ENCODE measurements at regions of chr2 and their contacts with region 1.

Region 1: DNA sequence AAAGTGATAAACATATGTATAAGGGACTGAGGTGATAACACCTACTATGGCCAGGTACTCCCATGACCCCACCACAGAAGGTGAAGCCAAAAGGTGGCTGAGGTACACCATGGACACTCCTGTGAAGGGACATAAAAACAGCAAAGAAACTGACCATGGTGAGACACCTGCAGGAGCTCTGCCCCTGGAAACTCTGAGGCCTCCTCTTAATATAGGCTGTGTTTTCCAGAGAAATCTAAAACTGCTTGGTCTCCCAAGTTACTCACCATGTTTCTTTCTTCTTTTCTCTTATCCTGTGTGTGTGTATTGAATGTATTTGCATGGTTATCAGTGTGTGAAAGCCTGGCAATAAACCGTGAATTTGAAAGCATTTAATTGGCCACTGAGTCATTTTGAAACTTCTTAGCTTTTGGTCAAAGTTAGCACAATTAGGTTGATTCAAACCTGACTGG is 739.3 kb upstream of the GCFC2 start:
- DNase-seq: peak; percentile 90
- ATAC-seq: peak; percentile 93
- H3K4me3 ChIP-seq: no peak overlapping the region
- H3K27ac ChIP-seq: no peak overlapping the region
- H3K4me1 ChIP-seq: 0 out of 2 replicates have a peak, but pooled peaks cover 3% of the 10 kb centered on the region
- H3K27me3 ChIP-seq: no peaks in the 10 kb centered on the region
- CTCF ChIP-seq: no peak
- EP300 ChIP-seq: peak; percentile 87 to 97
- POLR2A ChIP-seq: no peak
- RAD21 ChIP-seq: no peak

Region 2: DNA sequence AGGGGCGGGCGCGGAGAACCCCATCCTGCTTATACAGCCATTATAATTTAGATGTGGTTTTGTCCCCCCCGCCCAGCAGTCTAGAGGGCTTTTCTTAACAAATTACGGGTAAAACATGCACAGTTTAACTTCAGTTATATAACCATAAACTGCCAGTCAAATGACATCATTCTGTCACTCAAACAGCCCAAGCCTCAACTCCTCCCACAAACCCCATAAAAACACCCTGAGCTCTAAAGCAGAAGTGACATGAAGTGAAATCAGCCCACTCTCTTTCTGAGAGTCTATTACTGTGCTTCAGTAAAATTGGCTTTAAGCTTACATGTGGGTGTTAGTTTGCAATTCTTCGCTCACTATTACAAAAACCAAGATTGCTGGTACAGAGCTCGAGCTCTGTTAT is 34.2 kb before region 1 on chr2:
- CTCF ChIA-PET with region 1: interaction called, 5 read pairs
- POLR2A ChIA-PET with region 1: interaction called, 4 read pairs
- RAD21 ChIA-PET with region 1: interaction called, 5 read pairs
- SMC1A ChIA-PET with region 1: interaction called, 14 read pairs
- in situ Hi-C with region 1: no loop called
- intact Hi-C with region 1: no loop called
- DNase-seq: peak; percentile 17
- ATAC-seq: peak; percentile 99
- H3K4me3 ChIP-seq: no peak overlapping the region
- H3K27ac ChIP-seq: no peak overlapping the region
- H3K4me1 ChIP-seq: no peaks in the 10 kb centered on the region
- H3K27me3 ChIP-seq: no peaks in the 10 kb centered on the region
- CTCF ChIP-seq: no peak
- EP300 ChIP-seq: no peak
- POLR2A ChIP-seq: no peak
- RAD21 ChIP-seq: no peak

Region 3: GRCh38 chr2:76437564-76437963 is 12.5 kb before region 1 on chr2:
- CTCF ChIA-PET with region 1: no interaction called
- POLR2A ChIA-PET with region 1: no interaction called
- RAD21 ChIA-PET with region 1: no interaction called
- SMC1A ChIA-PET with region 1: no interaction called
- in situ Hi-C with region 1: no loop called
- intact Hi-C with region 1: no loop called
- DNase-seq: no peak
- ATAC-seq: no peak
- H3K4me3 ChIP-seq: no peak overlapping the region
- H3K27ac ChIP-seq: no peak overlapping the region
- H3K4me1 ChIP-seq: no peaks in the 10 kb centered on the region
- H3K27me3 ChIP-seq: no peaks in the 10 kb centered on the region
- CTCF ChIP-seq: no peak
- EP300 ChIP-seq: no peak
- POLR2A ChIP-seq: no peak
- RAD21 ChIP-seq: no peak

Region 4: GRCh38 chr2:76464310-76464709 is 14.3 kb after region 1 on chr2:
- CTCF ChIA-PET with region 1: interaction called, 11 read pairs
- POLR2A ChIA-PET with region 1: no interaction called
- RAD21 ChIA-PET with region 1: interaction called, 22 read pairs
- SMC1A ChIA-PET with region 1: interaction called, 38 read pairs
- in situ Hi-C with region 1: no loop called
- intact Hi-C with region 1: no loop called
- DNase-seq: no peak
- ATAC-seq: peak; percentile 61
- H3K4me3 ChIP-seq: no peak overlapping the region
- H3K27ac ChIP-seq: no peak overlapping the region
- H3K4me1 ChIP-seq: no peaks in the 10 kb centered on the region
- H3K27me3 ChIP-seq: no peaks in the 10 kb centered on the region
- CTCF ChIP-seq: no peak; a peak in 1 of 6 replicates
- EP300 ChIP-seq: no peak
- POLR2A ChIP-seq: no peak
- RAD21 ChIP-seq: no peak